Cardiac septum (tissue), 1 donor: ENCODE measurements at regions of chr11 and their contacts with region 1.

Region 1: GRCh38 chr11:112113539-112114457 is 27.1 kb downstream of the SDHD start:
- DNase-seq: no peak

Region 2: DNA sequence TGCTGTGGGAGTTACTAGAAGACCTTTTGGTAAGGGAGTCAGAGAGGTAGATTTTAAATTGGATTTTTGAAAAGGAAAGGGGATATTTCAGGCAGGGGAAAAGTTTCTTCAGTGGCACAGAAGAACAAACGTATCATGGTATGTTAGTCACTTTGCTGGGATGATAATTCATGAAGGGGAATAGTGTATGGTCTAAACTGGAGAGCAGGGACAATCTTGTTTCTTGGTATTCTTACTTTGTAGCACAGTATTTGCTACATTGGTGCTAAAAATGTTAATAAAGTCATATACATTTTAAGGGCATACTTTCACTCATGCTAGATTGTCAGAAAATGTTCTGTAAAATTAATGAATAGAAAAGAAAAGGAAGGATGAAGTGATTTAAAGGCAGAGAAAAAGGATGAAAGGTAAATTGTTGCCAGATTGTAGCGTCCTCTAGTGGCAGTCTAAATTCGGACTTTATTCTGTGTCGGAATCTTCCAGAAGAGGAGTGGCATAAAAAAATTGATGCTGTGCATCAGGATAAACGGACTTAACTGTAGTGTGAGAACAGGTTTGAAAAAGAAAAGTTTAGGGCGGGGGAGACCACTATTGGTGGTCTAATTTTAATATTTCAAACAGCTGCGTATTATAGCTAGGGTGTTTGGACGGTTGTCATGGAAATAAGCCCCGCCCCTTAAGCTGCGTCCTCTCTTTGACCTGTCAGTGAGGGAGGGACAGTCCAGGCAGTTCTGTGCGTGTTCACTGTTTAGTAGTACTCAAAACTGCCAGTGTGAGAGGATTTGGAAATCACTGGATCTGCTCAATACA is 61.2 kb after region 1 on chr11 and contains the start of gene BCO2:
- intact Hi-C with region 1: loop called (anchors 5 kb)
- DNase-seq: peak; percentile 82
- total RNA-seq, gene BCO2: 67.8 TPM

Region 3: DNA sequence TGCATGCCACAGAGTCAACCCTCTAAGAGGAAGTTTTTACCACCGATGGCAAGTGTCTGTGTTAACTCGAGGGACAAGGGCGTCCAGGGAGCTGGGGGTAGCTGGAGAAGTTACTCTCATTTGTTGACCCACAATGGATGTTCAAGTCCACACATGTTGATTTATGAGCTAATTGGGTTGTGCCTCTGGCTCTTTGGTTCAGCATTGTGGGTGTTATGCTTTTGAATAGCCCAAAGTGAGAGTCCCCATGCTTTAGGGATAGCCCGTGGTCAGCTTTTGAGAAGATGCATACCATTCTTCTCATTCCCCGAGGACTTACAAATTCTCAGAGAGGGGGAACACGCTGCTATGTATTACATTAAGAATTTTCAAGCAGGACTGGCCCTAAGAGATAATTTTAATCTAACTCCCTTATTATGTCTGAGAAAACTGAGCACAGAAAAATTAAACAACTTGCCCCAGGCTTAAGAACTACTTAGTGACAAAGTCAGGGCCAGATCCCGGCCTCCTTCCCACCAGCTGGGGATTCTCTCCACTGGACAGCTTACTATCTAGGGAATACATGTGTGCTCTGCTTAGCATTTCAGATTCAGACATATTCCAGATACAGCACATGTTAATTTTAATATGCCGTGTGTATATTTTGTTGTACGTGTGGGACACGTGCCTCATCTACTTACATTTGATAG is 152.1 kb after region 1 on chr11:
- intact Hi-C with region 1: loop called (anchors 5 kb)
- DNase-seq: no peak

Region 4: GRCh38 chr11:112280268-112281126 is 166.7 kb after region 1 on chr11:
- intact Hi-C with region 1: loop called (anchors 5 kb)
- DNase-seq: no peak